Activated B cell treated with CpG ODN at 0.5 μM for 24 hours (primary cell): ENCODE measurements at regions of chr7 and their contacts with region 1.

Region 1: GRCh38 chr7:43439631-43440401 is 143.1 kb upstream of the STK17A start:
- DNase-seq: no peak
- ATAC-seq: no peak
- H3K4me3 Mint-ChIP-seq: no peak overlapping the region
- H3K27ac Mint-ChIP-seq: no peak overlapping the region
- H3K4me1 Mint-ChIP-seq: no peaks in the 10 kb centered on the region
- H3K27me3 Mint-ChIP-seq: peaks cover 4% of the 10 kb centered on the region
- CTCF ChIP-seq: peak; percentile 29

Region 2: DNA sequence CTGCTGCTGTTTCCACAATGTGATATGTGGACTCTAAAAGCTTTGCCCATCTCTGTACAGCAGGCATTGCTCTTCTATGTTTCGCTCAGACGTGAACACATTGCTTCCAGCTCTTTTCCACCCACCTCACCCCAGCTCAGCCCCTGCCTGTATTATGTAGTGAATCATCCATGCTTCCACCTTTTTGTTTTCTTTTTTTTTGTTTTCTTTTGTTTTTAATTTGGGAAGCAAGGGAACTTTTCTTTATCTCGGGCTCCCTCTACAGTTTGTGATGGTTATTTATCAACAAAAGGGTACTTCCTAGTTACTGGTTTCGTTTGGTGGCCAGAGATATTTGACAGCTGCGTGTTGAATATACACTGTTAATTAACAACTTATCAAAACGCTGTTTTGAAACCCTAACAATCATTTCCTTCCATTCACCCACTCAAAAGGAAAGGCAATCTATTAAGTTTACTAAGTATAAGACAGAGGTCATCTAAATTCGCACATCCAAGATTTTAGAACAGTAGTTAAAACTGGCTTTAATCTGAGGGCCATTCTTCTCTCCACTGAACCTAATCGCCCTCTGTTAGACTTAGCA is 15.2 kb after region 1 on chr7:
- CTCF ChIA-PET with region 1: interaction called, 8 read pairs
- POLR2A ChIA-PET with region 1: interaction called, 10 read pairs
- intact Hi-C with region 1: no loop called
- DNase-seq: no peak
- ATAC-seq: no peak
- H3K4me3 Mint-ChIP-seq: no peak overlapping the region
- H3K27ac Mint-ChIP-seq: no peak overlapping the region
- H3K4me1 Mint-ChIP-seq: peaks cover 4% of the 10 kb centered on the region
- H3K27me3 Mint-ChIP-seq: no peaks in the 10 kb centered on the region
- CTCF ChIP-seq: no peak

Region 3: DNA sequence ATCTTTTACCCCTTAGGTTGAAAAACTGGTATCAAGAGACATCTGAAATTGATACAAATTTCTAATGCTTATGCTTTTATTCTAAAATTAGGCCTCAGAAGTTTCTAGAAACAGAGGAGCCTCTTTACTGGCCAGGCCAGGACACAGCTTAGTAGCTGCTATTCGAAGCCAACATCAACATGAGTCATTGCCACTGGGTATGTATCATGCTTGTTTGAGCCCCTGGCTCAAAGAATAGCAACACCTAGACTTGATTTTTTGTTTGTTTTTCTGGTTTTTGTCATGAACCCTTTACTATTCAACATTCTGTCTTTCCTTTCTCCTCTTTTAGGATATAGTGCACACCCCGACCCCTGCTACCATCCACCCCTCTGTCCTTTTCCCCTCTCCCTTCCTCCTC is 52.2 kb after region 1 on chr7:
- CTCF ChIA-PET with region 1: no interaction called
- POLR2A ChIA-PET with region 1: no interaction called
- intact Hi-C with region 1: no loop called
- DNase-seq: no peak
- ATAC-seq: no peak
- H3K4me3 Mint-ChIP-seq: no peak overlapping the region
- H3K27ac Mint-ChIP-seq: no peak overlapping the region
- H3K4me1 Mint-ChIP-seq: peaks cover 9% of the 10 kb centered on the region
- H3K27me3 Mint-ChIP-seq: no peaks in the 10 kb centered on the region
- CTCF ChIP-seq: no peak